ENCODE measurements at regions of chr11 and their contacts with region 1.

Region 1: DNA sequence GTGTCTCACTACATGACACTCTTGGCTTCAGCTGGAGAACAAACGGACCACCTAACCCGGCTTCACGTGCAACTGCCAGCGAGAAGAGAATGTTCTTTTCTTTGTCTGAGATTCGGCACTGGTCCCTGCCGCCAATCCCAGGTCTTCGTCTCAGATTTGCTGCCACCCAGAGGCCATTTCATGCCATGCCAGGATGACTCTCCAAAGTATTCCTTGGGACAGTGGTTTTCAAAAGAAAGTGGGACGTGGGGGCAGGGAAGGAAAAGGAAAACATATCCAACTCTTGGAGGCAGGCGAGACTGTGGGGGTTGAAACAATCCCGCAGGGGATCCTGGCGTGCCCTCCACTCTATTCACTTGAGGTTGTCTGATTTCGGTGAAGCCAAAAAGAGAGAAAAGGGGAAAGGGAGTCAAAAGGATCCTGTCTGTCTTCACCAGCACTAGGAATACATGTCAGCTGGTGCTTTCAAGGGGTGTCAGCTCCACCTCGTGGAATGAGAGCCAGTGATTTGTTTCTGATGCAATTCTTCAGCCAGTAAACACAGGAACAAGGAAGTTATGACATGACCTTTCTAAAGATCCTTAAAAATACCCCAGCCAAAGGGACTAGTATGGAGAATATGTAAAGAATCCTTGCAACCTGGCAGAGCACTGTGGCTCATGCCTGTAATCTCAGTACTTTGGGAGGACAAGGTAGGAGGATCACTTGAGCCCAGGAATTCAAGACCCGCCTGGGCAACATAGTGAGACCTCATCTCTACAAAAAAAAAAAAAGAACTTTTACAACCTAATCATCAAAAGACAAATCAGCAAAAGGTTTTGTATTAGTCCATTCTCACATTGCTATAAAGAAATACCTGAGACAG is 41.0 kb upstream of the APLNR start:
- DNase-seq: peak; percentile 64
- H3K4me3 ChIP-seq: no peak overlapping the region
- H3K27ac ChIP-seq: peak overlapping the region; percentile 62
- H3K4me1 ChIP-seq: peaks cover 36% of the 10 kb centered on the region
- H3K27me3 ChIP-seq: no peaks in the 10 kb centered on the region
- CTCF ChIP-seq: peak; percentile 82 to 93

Region 2: GRCh38 chr11:57205041-57205671 is 72.9 kb before region 1 on chr11:
- CTCF ChIA-PET with region 1: no interaction called
- dilution Hi-C with region 1: no loop called
- in situ Hi-C with region 1: no loop called
- intact Hi-C with region 1: no loop called
- DNase-seq: peak; percentile 39
- H3K4me3 ChIP-seq: no peak overlapping the region
- H3K27ac ChIP-seq: no peak overlapping the region
- H3K4me1 ChIP-seq: no peaks in the 10 kb centered on the region
- H3K27me3 ChIP-seq: no peaks in the 10 kb centered on the region
- CTCF ChIP-seq: no peak

Region 3: DNA sequence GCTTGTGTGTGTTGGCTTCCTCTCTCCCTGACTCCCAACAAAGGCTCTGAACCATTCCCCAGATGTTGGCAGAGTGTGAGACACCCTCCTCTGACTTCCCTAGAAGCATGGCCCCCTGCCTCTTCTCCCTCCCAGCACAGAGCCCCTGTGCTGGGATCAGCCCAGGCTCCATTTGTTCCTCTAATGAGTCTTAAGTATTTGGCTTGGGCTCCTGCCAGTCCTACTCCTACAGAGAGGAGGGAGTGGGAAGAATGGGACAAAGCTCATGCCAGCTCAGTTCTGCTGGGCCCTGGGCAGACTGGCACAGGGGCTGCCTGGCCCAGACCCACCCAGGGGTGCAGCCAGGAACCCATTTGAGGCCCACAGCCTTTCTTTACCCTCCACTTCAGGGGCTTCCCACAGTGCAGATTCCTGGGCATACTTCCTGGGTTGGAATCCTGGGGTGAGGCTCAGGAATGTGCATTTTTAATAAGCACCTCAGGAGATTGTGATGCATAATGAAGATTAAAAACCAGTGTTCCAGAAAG is 16.6 kb after region 1 on chr11:
- CTCF ChIA-PET with region 1: no interaction called
- dilution Hi-C with region 1: no loop called
- in situ Hi-C with region 1: no loop called
- intact Hi-C with region 1: loop called (anchors 1 kb)
- DNase-seq: peak; percentile 53
- H3K4me3 ChIP-seq: no peak overlapping the region
- H3K27ac ChIP-seq: peak overlapping the region; percentile 47
- H3K4me1 ChIP-seq: peaks cover 50% of the 10 kb centered on the region
- H3K27me3 ChIP-seq: no peaks in the 10 kb centered on the region
- CTCF ChIP-seq: no peak

Measured in mammary epithelial cell (primary cell).